ENCODE measurements at regions of chr2 and their contacts with region 1.

Region 1: DNA sequence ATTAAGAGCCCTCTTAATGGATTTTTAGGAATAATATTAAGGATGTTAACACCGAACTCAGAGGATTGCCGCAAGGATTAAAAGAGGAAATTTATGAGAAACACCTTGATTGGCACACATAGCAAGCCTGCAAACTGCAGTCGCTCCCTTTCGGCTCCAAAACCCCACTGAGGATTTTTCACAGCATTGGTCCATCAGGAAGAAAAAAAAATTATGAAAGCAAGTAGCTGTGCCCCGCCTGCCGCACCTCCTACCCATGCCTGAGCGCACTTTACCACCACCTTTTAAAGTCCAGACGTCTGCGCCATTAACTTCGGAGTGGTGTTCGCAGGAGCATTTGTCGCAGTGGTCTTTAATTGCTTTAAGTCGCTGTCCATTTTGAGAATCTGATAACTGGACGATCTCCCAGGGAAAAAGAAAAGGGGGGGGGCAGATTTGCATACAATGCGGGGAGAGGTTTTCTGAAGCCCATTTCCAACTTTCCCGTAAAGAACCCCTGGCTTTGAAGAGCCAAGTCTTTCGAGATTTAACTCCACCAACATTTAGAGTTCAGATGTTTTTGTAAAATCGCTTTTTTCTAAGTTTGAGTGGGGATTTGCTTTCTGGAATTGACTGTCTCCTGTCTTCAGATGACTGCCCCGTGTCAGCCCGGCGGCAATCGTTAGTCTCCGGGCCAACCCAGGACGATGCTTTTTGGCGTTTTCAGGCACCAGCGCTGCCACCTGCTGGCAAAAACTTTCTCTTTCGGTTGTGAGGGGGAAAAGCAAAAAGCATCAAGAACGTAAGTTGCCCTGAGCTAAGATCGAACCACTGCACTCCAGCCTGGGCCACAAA is 914 bp upstream of the TRABD2A start:
- DNase-seq: peak; percentile 97
- H3K4me3 Mint-ChIP-seq: peak overlapping the region; percentile 87
- H3K27ac Mint-ChIP-seq: peak overlapping the region; percentile 97
- H3K4me1 Mint-ChIP-seq: peaks cover 51% of the 10 kb centered on the region
- H3K27me3 Mint-ChIP-seq: no peaks in the 10 kb centered on the region

Region 2: GRCh38 chr2:84424152-84424551 is 457.6 kb before region 1 on chr2:
- CTCF ChIA-PET with region 1: no interaction called
- intact Hi-C with region 1: no loop called
- DNase-seq: no peak
- H3K4me3 Mint-ChIP-seq: no peak overlapping the region
- H3K27ac Mint-ChIP-seq: no peak overlapping the region
- H3K4me1 Mint-ChIP-seq: no peaks in the 10 kb centered on the region
- H3K27me3 Mint-ChIP-seq: no peaks in the 10 kb centered on the region

Region 3: DNA sequence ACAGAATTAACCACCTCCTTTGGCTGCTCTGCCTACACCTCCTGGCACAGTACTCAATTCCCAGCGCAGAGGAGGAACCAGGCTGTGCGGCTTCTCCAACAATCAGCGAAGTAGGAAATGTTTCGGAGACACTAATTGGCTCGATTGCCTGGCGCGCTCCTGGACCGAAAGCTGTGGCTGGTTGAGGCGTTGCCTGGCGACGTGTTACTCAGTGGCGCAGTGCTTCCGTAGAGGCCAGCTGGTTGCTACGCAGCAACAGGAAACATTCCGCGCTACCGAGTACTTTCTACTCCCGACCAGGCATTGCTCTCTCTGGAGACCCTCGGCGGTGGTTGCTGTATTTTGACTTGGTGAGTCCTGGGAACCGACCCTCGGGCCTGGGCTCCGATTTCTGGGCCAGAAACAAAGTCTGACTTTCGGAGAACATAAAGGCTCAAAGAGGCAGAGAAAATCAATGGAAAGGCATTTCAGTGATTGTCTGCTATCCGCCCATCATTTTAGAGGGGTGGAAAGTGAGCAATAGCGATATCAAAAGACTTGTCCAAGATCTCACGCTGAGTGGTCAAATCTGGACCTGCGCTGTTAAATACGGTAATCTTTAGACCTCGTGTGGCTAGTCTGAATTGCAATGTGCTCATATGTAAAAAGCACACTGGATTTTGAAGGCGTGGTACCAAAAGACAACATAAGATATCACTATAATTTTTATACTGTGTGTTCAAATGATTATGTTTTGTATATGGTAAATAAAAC is 365.4 kb before region 1 on chr2 and contains the start of gene DNAH6:
- CTCF ChIA-PET with region 1: interaction called, 3 read pairs
- intact Hi-C with region 1: loop called (anchors 1 kb)
- DNase-seq: peak; percentile 94
- H3K4me3 Mint-ChIP-seq: peak within 1 kb of the TSS; percentile 85
- H3K27ac Mint-ChIP-seq: no peak within 1 kb of the TSS
- H3K4me1 Mint-ChIP-seq: peaks cover 22% of the 10 kb centered on the region
- H3K27me3 Mint-ChIP-seq: no peaks in the 10 kb centered on the region
- total RNA-seq, gene DNAH6: 0.07 to 0.62 TPM

Region 4: GRCh38 chr2:84649487-84650142 is 232.2 kb before region 1 on chr2:
- CTCF ChIA-PET with region 1: interaction called, 4 read pairs
- intact Hi-C with region 1: loop called (anchors 2 kb)
- DNase-seq: no peak
- H3K4me3 Mint-ChIP-seq: peak overlapping the region; percentile 0
- H3K27ac Mint-ChIP-seq: peak overlapping the region; percentile 60
- H3K4me1 Mint-ChIP-seq: peaks cover 75% of the 10 kb centered on the region
- H3K27me3 Mint-ChIP-seq: no peaks in the 10 kb centered on the region

Region 5: GRCh38 chr2:84768840-84769239 is 113.0 kb before region 1 on chr2:
- CTCF ChIA-PET with region 1: no interaction called
- intact Hi-C with region 1: no loop called
- DNase-seq: no peak
- H3K4me3 Mint-ChIP-seq: no peak overlapping the region
- H3K27ac Mint-ChIP-seq: no peak overlapping the region
- H3K4me1 Mint-ChIP-seq: no peaks in the 10 kb centered on the region
- H3K27me3 Mint-ChIP-seq: no peaks in the 10 kb centered on the region

Region 6: DNA sequence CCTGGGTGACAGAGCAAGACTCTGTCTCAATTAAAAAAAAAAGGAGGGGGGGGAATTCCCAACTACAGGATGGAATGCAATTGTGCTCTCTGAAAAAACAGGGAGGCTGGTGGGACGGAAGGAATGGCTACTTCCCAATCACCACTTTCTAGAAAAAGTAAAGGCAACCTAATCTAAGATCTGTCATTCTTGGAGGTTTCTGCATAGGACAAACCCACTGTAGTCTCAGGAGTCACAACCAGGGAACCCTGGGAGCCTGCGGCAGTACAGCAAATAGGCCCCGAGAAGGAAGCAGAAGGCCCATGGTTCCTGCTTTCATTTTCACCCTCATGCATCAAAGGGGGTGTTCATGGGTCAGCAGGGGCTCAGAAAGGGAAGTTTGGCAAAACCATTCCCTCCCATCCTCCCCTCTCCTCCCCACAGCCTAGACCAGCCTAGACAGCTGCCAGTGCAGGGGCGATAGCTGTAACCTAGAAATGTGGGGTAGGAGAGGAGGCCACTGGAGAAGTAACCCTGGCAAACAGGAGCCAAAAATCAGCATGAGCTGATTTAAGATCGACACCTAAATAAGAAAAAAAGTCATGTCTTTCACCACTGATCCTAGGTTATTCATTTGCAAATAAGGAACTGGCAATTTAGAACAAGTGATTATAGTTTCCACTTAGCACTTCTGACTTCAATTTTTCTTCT is 48.9 kb before region 1 on chr2:
- CTCF ChIA-PET with region 1: interaction called, 9 read pairs
- intact Hi-C with region 1: loop called (anchors 2 kb)
- DNase-seq: peak; percentile 52
- H3K4me3 Mint-ChIP-seq: peak overlapping the region; percentile 43
- H3K27ac Mint-ChIP-seq: peak overlapping the region; percentile 87
- H3K4me1 Mint-ChIP-seq: peaks cover 33% of the 10 kb centered on the region
- H3K27me3 Mint-ChIP-seq: no peaks in the 10 kb centered on the region

Region 7: DNA sequence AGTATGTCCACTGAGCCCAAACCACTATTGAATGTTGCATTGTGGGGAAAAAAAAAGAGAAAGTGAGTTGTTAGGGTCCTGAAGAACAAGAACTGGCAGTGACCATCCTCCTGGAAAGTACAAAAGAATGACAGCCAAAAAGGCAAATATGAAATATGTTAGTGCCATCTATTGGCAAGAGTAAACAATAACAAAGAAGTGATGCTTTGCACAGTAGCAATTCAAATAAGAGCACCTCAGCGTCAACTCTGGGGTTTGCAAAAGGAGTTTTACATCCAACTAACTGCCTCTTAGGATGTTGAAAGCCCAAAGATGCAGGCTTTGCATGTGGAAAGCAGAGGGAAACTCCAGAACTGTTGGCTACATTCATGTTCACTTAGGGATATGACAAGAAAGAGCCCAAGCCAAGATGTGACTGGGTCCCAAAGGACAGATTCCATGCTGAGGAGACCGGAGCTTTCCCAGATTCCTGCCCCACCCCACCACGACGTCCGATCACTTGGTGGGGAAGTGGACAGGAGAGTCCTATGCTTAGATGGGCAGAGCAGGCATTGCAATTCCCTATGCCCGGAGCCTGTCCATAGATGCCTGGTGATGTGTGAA is 16.5 kb before region 1 on chr2:
- CTCF ChIA-PET with region 1: interaction called, 11 read pairs
- intact Hi-C with region 1: loop called (anchors 1 kb)
- DNase-seq: peak; percentile 25
- H3K4me3 Mint-ChIP-seq: no peak overlapping the region
- H3K27ac Mint-ChIP-seq: peak overlapping the region; percentile 77
- H3K4me1 Mint-ChIP-seq: peaks cover 87% of the 10 kb centered on the region
- H3K27me3 Mint-ChIP-seq: no peaks in the 10 kb centered on the region

Region 8: DNA sequence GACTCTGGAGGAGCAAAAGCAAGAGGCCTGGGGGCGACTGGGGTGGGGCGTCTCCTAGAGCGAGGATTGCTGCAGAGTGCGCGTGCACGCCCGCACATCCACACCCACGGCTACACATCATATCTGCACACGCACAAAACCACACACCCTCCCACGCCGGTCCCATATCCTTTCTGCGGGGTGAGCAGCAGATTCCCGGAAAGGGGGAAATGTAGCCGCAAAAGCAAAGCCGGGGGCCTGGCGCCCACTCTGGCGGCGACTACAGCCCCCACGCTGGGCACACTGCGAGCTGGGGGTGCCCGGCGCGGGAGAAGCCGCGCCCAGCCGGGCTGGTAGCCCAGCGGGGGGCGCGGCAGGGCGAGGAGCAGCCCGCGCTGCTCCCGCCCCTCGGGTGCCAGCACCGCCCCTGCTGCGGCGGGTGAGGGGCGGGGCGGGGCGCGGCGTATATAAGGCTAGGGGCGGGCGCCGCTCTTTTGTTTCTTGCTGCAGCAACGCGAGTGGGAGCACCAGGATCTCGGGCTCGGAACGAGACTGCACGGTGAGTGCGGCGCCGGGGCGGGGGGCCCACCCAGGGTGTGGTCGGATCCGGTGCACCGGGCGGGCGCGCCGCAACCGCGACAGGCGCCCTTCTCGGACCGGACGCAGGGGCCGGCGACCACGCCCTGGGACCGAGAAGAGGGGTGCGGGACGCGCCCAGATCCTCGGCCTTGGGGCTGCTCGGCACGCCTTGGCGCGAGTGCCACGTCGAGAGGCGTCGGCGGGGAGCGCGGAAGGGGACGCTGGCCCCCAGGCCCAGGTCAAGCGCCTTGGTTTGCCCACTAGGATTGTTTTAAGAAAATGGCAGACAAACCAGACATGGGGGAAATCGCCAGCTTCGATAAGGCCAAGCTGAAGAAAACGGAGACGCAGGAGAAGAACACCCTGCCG is 23.6 kb after region 1 on chr2 and contains the start of gene TMSB10:
- CTCF ChIA-PET with region 1: interaction called, 6 read pairs
- intact Hi-C with region 1: loop called (anchors 1 kb)
- DNase-seq: peak; percentile 82
- H3K4me3 Mint-ChIP-seq: peak within 1 kb of the TSS; percentile 86
- H3K27ac Mint-ChIP-seq: peak within 1 kb of the TSS; percentile 92
- H3K4me1 Mint-ChIP-seq: peaks cover 43% of the 10 kb centered on the region
- H3K27me3 Mint-ChIP-seq: no peaks in the 10 kb centered on the region
- total RNA-seq, gene TMSB10: 1,772 to 1,864 TPM